Heart right ventricle (tissue), 16 donors: ENCODE measurements at regions of chr9 and their contacts with region 1.

Region 1: DNA sequence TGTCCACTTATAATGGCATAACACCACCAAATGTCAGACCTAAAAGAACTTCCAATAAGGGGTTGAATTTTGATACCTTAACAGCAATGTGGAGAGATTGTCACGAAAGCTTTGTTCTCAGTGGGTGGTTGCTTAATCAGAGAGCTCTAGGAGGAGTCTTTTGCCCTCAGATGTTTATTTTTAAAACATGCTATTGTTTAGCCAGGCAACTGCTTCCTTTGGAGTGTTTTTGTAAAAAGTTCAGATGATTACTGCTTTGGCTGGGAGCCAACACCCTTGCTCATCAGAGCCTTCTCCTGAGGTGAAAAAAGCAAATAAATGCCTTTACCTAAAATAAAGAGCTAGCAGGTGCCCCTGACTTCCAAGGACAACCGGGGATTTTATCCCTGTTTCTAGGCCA is 65.0 kb downstream of the SLC1A1 start:
- DNase-seq: peak in 1 of 2 donors; percentile 62
- ATAC-seq: peak; percentile 21 to 78 (median 62)
- H3K4me3 ChIP-seq: no peak overlapping the region
- H3K27ac ChIP-seq: peak overlapping the region in 8 of 10 donors; percentile 33 to 82 (median 60)
- H3K4me1 ChIP-seq: peaks cover 2 to 73% (median 32%) of the 10 kb centered on the region in 9 donors
- H3K27me3 ChIP-seq: no peaks in the 10 kb centered on the region
- CTCF ChIP-seq: no peak

Region 2: GRCh38 chr9:4590430-4591122 is 35.3 kb after region 1 on chr9:
- intact Hi-C with region 1: loop called in 2 of 10 experiments (anchors 5 kb)
- DNase-seq: no peak
- ATAC-seq: no peak
- H3K4me3 ChIP-seq: no peak overlapping the region
- H3K27ac ChIP-seq: no peak overlapping the region
- H3K4me1 ChIP-seq: peaks cover 0 to 37% (median 13%) of the 10 kb centered on the region in 9 donors
- H3K27me3 ChIP-seq: no peaks in the 10 kb centered on the region
- CTCF ChIP-seq: no peak

Region 3: GRCh38 chr9:4596165-4596922 is 41.1 kb after region 1 on chr9:
- intact Hi-C with region 1: loop called in 2 of 10 experiments (anchors 5 kb)
- DNase-seq: peak in 1 of 2 donors; percentile 10
- ATAC-seq: peak; percentile 23 to 75 (median 68)
- H3K4me3 ChIP-seq: no peak overlapping the region
- H3K27ac ChIP-seq: peak overlapping the region in 7 of 10 donors; percentile 12 to 69 (median 53)
- H3K4me1 ChIP-seq: peaks cover 0 to 25% (median 13%) of the 10 kb centered on the region in 9 donors
- H3K27me3 ChIP-seq: no peaks in the 10 kb centered on the region
- CTCF ChIP-seq: no peak

Region 4: GRCh38 chr9:4604678-4605095 is 49.4 kb after region 1 on chr9:
- intact Hi-C with region 1: loop called in 2 of 10 experiments (anchors 5 kb)
- DNase-seq: peak in 1 of 2 donors; percentile 80
- ATAC-seq: peak in 7 of 8 donors; percentile 58 to 85 (median 74)
- H3K4me3 ChIP-seq: no peak overlapping the region
- H3K27ac ChIP-seq: no peak overlapping the region
- H3K4me1 ChIP-seq: no peaks in the 10 kb centered on the region
- H3K27me3 ChIP-seq: no peaks in the 10 kb centered on the region
- CTCF ChIP-seq: peak; percentile 71 to 80 (median 75)